Heart left ventricle (tissue), 16 donors: ENCODE measurements at regions of chr1 and their contacts with region 1.

Region 1: DNA sequence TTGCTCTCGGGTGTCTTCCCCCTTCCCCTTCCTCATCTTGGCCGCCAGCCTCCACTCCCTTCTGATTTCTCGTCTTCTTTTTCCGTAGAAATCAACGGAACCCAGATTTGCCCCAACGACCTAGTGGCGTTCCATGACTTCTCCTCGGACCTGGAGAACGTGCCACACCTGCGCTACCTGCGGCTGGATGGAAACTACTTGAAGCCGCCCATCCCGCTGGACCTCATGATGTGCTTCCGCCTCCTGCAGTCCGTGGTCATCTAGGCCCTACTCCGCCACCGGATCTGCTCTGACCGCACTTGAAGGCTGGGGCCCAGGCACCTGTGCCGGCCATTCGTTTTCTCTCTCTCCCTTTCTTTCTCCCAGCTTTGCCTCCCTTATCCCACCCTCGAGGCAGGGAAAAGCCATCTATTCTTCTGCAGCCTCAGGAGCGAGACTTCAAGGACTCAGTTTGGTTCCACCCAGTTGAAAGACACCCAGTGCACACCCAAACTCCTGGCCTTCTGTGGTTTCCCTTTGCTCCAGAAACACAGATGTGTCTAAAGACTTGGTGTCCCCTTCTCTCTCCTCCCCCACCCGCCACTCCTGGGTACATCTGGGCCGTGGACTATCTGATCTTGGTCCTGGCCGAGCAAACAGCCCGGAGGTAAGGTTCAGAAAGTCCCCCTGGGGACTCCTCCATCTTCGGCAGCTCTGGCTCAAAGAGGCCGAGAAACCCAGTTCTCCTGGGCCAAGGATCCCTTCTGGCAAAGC is 7.2 kb upstream of the OPTC start:
- DNase-seq: peak in 1 of 5 donors; percentile 38
- ATAC-seq: peak in 3 of 4 donors; percentile 3 to 34 (median 23)
- H3K4me3 ChIP-seq: peak overlapping the region in 11 of 12 donors; percentile 10 to 54 (median 45)
- H3K27ac ChIP-seq: peak overlapping the region; percentile 55 to 90 (median 84)
- H3K4me1 ChIP-seq: peaks cover 0 to 46% (median 16%) of the 10 kb centered on the region in 12 donors
- H3K27me3 ChIP-seq: no peaks in the 10 kb centered on the region
- CTCF ChIP-seq: no peak
- POLR2A ChIP-seq: no peak

Region 2: GRCh38 chr1:203440771-203441170 is 46.0 kb before region 1 on chr1:
- intact Hi-C with region 1: loop called in 3 of 10 experiments (anchors 2 to 5 kb)
- DNase-seq: peak; percentile 70 to 85 (median 78)
- ATAC-seq: peak; percentile 92 to 97 (median 94)
- H3K4me3 ChIP-seq: no peak overlapping the region
- H3K27ac ChIP-seq: peak overlapping the region in 6 of 12 donors; percentile 1 to 77 (median 52)
- H3K4me1 ChIP-seq: peaks cover 0 to 45% (median 13%) of the 10 kb centered on the region in 12 donors
- H3K27me3 ChIP-seq: no peaks in the 10 kb centered on the region
- CTCF ChIP-seq: peak; percentile 40 to 76 (median 64)
- POLR2A ChIP-seq: no peak

Region 3: DNA sequence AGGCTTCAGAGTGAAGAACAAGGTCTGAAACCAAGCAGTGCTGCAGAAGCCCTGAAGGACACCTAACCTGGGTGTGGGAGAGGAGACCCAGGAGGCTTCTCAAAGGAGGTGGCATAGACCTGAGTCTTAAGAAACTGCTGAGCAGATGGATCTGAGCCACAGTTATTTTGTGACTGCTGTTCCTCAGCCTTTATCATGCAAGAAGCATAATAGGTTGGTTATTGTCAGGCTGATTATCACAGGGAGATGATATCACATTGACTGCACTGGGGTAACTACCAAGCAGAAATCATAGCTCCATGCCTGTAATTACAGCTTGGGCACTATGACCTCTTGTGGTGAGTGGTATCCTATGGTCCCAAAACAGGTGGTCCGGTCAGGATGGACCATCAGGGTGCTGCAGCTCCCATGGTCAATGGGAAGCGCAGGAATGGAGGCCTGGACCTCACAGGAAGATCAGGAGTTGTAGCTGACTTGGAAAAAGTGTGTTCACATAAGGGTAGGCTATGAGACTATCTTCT is 128.3 kb after region 1 on chr1:
- intact Hi-C with region 1: no loop called
- DNase-seq: no peak
- ATAC-seq: peak in 3 of 4 donors; percentile 53 to 71 (median 53)
- H3K4me3 ChIP-seq: no peak overlapping the region
- H3K27ac ChIP-seq: no peak overlapping the region
- H3K4me1 ChIP-seq: peaks cover 0 to 14% (median 0%) of the 10 kb centered on the region in 12 donors
- H3K27me3 ChIP-seq: no peaks in the 10 kb centered on the region
- CTCF ChIP-seq: peak in 7 of 12 donors; percentile 8 to 39 (median 32)
- POLR2A ChIP-seq: no peak